ENCODE measurements at regions of chr5 and their contacts with region 1.

Region 1: GRCh38 chr5:112995764-112996618 is 19.4 kb downstream of the DCP2 start:
- H3K4me3 ChIP-seq: no peak overlapping the region
- H3K27ac ChIP-seq: no peak overlapping the region
- H3K4me1 ChIP-seq: peaks cover 2% of the 10 kb centered on the region; the same call in 1 of the 2 replicates
- CTCF ChIP-seq: peak; percentile 61; the same call in 1 of the 2 replicates

Region 2: GRCh38 chr5:112983363-112983762 is 12.6 kb before region 1 on chr5:
- CTCF ChIA-PET with region 1: interaction called, 24 read pairs
- POLR2A ChIA-PET with region 1: no interaction called
- H3K4me3 ChIP-seq: no peak overlapping the region
- H3K27ac ChIP-seq: no peak overlapping the region
- H3K4me1 ChIP-seq: peaks cover 16% of the 10 kb centered on the region
- CTCF ChIP-seq: no peak

Region 3: GRCh38 chr5:113133211-113133975 is 137.4 kb after region 1 on chr5:
- CTCF ChIA-PET with region 1: no interaction called
- POLR2A ChIA-PET with region 1: no interaction called
- H3K4me3 ChIP-seq: no peak overlapping the region
- H3K27ac ChIP-seq: no peak overlapping the region
- H3K4me1 ChIP-seq: no peaks in the 10 kb centered on the region
- CTCF ChIP-seq: no peak

Region 4: GRCh38 chr5:113187906-113188305 is 191.9 kb after region 1 on chr5:
- CTCF ChIA-PET with region 1: no interaction called
- POLR2A ChIA-PET with region 1: no interaction called
- H3K4me3 ChIP-seq: no peak overlapping the region
- H3K27ac ChIP-seq: no peak overlapping the region
- H3K4me1 ChIP-seq: peaks cover 6% of the 10 kb centered on the region; the same call in 1 of the 2 replicates
- CTCF ChIP-seq: no peak

Region 5: GRCh38 chr5:113330533-113331208 is 334.7 kb after region 1 on chr5:
- CTCF ChIA-PET with region 1: interaction called, 41 read pairs
- POLR2A ChIA-PET with region 1: no interaction called
- H3K4me3 ChIP-seq: no peak overlapping the region
- H3K27ac ChIP-seq: no peak overlapping the region
- H3K4me1 ChIP-seq: no peaks in the 10 kb centered on the region
- CTCF ChIP-seq: 0 out of 2 replicates have a peak, but pooled peaks have one; percentile 13

Region 6: GRCh38 chr5:113513384-113514288 is 517.6 kb after region 1 on chr5 and contains the start of gene YTHDC2:
- CTCF ChIA-PET with region 1: interaction called, 58 read pairs
- POLR2A ChIA-PET with region 1: no interaction called
- H3K4me3 ChIP-seq: peak within 1 kb of the TSS; percentile 94
- H3K27ac ChIP-seq: peak within 1 kb of the TSS; percentile 77
- H3K4me1 ChIP-seq: no peaks in the 10 kb centered on the region
- CTCF ChIP-seq: peak; percentile 87

Region 7: GRCh38 chr5:113606298-113607134 is 610.5 kb after region 1 on chr5:
- CTCF ChIA-PET with region 1: interaction called, 25 read pairs
- POLR2A ChIA-PET with region 1: no interaction called
- H3K4me3 ChIP-seq: no peak overlapping the region
- H3K27ac ChIP-seq: no peak overlapping the region
- H3K4me1 ChIP-seq: no peaks in the 10 kb centered on the region; the same call in 1 of the 2 replicates
- CTCF ChIP-seq: peak; percentile 86

Measured in HEK293 (cell line).